ENCODE measurements at regions of chr19 and their contacts with region 1.

Region 1: DNA sequence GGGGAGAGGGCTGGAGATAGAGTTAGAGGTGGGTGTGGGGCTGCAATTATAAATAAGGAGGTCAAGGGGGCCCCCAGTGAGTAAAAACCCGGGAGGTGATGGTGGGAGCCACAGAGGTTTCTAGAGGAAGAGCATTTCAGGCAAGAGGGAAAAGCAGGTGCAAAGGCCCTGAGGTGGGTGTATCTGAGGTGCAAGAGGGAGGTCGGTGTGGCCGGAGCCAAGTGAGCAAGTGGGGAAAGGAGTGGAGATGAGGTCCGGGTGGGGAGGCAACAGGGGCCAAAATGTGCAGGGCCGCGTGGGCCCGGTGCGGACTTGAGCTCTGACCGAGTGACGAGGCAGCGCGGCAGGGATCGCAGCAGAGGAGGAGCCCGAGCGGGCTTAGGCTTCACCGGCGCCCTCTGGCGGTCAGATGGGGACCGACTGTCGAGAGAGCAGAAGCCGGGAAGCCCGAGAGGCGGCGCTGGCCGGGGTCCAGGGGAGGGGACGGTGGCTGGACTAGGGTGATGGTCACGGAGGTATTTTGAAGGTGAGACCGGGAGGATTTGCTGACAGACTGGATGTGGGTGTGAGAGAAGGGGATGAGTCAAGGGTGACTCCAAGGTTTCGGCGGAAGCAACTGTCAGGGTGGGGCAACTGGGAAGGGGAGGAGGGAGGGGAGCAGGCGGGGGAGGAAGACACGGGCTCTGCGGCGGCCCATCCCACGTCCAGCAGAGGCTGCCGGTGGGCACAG is 17.7 kb upstream of the SPACA4 start:
- DNase-seq: peak; percentile 92
- H3K4me3 ChIP-seq: peak overlapping the region; percentile 47
- H3K27ac ChIP-seq: no peak overlapping the region
- H3K4me1 ChIP-seq: peaks cover 4% of the 10 kb centered on the region
- H3K27me3 ChIP-seq: no peaks in the 10 kb centered on the region
- CTCF ChIP-seq: peak; percentile 99

Region 2: GRCh38 chr19:48321622-48322591 is 266.9 kb before region 1 on chr19:
- CTCF ChIA-PET with region 1: interaction called, 6 read pairs
- POLR2A ChIA-PET with region 1: no interaction called
- intact Hi-C with region 1: loop called (anchors 2 kb)
- DNase-seq: peak; percentile 99
- H3K4me3 ChIP-seq: peak overlapping the region; percentile 57
- H3K27ac ChIP-seq: peak overlapping the region; percentile 97
- H3K4me1 ChIP-seq: peaks cover 51% of the 10 kb centered on the region
- H3K27me3 ChIP-seq: no peaks in the 10 kb centered on the region
- CTCF ChIP-seq: no peak

Region 3: GRCh38 chr19:48492925-48493717 is 95.7 kb before region 1 on chr19:
- CTCF ChIA-PET with region 1: interaction called, 20 read pairs
- POLR2A ChIA-PET with region 1: no interaction called
- intact Hi-C with region 1: no loop called
- DNase-seq: peak; percentile 98
- H3K4me3 ChIP-seq: peak overlapping the region; percentile 61
- H3K27ac ChIP-seq: peak overlapping the region; percentile 77
- H3K4me1 ChIP-seq: peaks cover 31% of the 10 kb centered on the region
- H3K27me3 ChIP-seq: no peaks in the 10 kb centered on the region
- CTCF ChIP-seq: no peak

Region 4: GRCh38 chr19:48553676-48554386 is 35.0 kb before region 1 on chr19:
- CTCF ChIA-PET with region 1: interaction called, 10 read pairs
- POLR2A ChIA-PET with region 1: no interaction called
- intact Hi-C with region 1: no loop called
- DNase-seq: no peak
- H3K4me3 ChIP-seq: no peak overlapping the region
- H3K27ac ChIP-seq: no peak overlapping the region
- H3K4me1 ChIP-seq: no peaks in the 10 kb centered on the region
- H3K27me3 ChIP-seq: no peaks in the 10 kb centered on the region
- CTCF ChIP-seq: no peak

Region 5: DNA sequence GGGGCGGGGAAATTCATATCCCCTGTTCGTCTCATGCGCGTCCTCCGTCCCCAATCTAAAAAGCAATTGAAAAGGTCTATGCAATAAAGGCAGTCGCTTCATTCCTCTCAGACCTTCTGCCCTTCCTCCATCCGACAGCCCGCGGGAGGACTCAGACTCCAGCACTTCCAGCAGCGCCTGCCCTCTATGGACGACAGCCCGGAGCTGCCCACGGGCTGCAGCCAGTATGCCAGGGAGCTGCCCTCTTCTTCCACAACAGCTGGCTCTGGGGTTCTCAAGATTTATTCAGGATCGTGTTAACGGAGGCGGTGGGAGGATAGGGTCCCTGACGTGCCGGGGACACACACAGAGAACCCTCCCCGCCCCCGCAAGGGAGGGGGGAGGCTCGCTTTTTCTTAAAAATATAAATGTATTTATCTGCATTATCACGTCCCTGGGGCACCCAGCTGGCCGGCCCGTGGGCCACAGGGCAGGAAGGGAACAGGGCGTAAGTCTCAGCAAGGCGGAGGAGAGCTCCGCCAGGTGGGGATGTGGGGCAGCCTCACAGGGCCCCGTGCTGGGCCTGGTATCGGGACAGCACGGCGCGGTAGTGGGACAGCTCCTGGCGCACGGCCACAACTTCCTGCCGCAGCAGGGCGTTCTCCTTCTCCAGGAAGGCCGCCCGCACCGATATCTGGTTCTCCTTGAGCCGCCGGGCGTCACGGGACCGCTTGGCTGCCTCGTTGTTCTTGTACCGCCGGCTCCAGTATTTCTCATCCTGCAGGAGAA is 41.6 kb after region 1 on chr19:
- CTCF ChIA-PET with region 1: interaction called, 15 read pairs
- POLR2A ChIA-PET with region 1: no interaction called
- intact Hi-C with region 1: no loop called
- DNase-seq: peak; percentile 94
- H3K4me3 ChIP-seq: peak overlapping the region; percentile 22
- H3K27ac ChIP-seq: peak overlapping the region; percentile 88
- H3K4me1 ChIP-seq: peaks cover 45% of the 10 kb centered on the region
- H3K27me3 ChIP-seq: no peaks in the 10 kb centered on the region
- CTCF ChIP-seq: peak; percentile 52

Region 6: DNA sequence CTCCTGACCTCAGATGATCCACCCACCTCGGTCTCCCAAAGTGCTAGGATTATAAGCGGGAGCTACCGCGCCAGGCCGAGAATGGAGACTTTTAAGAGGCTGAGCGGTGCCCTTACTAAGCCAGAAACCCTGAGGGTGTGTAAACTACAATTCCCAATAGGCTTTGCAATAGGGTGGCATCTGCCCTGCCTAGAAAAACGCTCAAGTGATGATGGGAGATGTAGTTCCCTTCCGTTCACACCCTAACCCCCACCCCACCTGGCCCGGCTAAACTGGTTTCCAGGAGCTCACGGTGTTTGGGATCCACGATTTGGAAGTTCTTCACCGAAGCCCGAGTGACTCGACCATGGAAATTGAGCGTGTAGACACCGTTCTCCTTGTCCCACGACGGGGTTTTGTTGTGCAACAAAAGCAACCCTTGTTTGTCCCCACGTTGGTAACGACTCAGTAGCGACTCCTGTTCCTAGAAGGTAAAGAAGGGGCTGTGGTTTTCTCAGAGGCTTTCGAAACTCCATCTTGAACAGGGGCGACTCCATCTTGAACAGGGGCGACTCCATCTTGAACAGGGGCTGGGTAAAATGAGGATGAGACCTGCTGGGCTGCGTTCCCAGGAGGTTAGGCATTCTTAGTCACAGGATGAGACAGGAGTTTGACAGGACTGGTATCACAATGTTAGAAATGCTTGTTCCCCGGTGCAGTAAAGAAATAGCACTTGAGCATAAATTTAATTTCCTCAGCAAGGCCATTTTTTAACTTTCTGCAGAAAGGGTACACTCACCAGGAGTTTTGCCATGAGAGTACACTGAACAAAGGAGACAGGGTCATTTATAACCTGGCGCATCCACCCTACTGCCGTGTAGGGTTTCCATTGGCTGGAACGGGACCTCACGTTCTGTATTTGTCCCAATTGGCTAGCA is 293.2 kb after region 1 on chr19:
- CTCF ChIA-PET with region 1: no interaction called
- POLR2A ChIA-PET with region 1: no interaction called
- intact Hi-C with region 1: no loop called
- DNase-seq: no peak
- H3K4me3 ChIP-seq: no peak overlapping the region
- H3K27ac ChIP-seq: no peak overlapping the region
- H3K4me1 ChIP-seq: no peaks in the 10 kb centered on the region
- H3K27me3 ChIP-seq: no peaks in the 10 kb centered on the region
- CTCF ChIP-seq: no peak

Measured in A673 (cell line).